BJ (cell line): ENCODE measurements at regions of chr10 and their contacts with region 1.

Region 1: DNA sequence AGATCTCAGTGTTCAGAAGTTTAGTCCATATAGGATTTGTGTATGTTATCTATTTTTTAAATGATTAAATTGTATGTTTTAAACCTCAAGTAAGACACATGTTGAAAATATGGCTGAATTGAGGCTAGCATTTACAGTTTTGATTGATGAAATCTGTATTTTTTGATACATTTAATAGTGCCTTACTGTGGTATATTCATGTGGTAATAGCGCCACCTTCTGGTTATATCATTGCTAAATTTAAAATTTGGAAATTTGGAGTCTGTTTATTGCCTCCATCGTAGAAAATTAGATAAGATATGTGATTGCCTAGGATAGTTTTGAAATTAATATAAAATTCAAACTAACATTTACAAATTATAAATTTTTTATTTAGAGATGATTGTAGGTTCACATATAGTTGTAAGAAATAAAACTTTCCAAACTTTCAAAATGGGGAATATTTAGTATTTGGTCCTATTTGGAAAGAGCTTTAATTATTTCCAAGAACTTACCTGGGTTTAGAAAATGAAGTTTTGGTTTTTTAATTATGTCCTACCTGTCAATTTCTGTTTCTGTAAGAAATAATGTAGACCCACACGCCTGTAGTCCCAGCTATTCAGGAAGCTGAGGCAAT is 19.1 kb upstream of the ARMS2 start:
- DNase-seq: no peak
- H3K4me3 ChIP-seq: no peak overlapping the region
- H3K27me3 ChIP-seq: no peaks in the 10 kb centered on the region
- CTCF ChIP-seq: peak; percentile 32

Region 2: GRCh38 chr10:122342293-122343134 is 92.8 kb before region 1 on chr10:
- CTCF ChIA-PET with region 1: interaction called, 92 read pairs
- POLR2A ChIA-PET with region 1: no interaction called
- DNase-seq: peak; percentile 49
- H3K4me3 ChIP-seq: no peak overlapping the region
- H3K27me3 ChIP-seq: no peaks in the 10 kb centered on the region
- CTCF ChIP-seq: peak; percentile 83

Region 3: GRCh38 chr10:122419876-122420623 is 15.3 kb before region 1 on chr10:
- CTCF ChIA-PET with region 1: interaction called, 10 read pairs
- POLR2A ChIA-PET with region 1: no interaction called
- DNase-seq: peak; percentile 68
- H3K4me3 ChIP-seq: no peak overlapping the region
- H3K27me3 ChIP-seq: no peaks in the 10 kb centered on the region
- CTCF ChIP-seq: no peak

Region 4: GRCh38 chr10:122453806-122454460 is 18.6 kb after region 1 on chr10:
- CTCF ChIA-PET with region 1: interaction called, 19 read pairs
- POLR2A ChIA-PET with region 1: no interaction called
- DNase-seq: no peak
- H3K4me3 ChIP-seq: no peak overlapping the region
- H3K27me3 ChIP-seq: peaks cover 7% of the 10 kb centered on the region
- CTCF ChIP-seq: no peak

Region 5: GRCh38 chr10:122565728-122566206 is 130.4 kb after region 1 on chr10:
- CTCF ChIA-PET with region 1: interaction called, 29 read pairs
- POLR2A ChIA-PET with region 1: no interaction called
- DNase-seq: peak; percentile 24
- H3K4me3 ChIP-seq: no peak overlapping the region
- H3K27me3 ChIP-seq: peaks cover 7% of the 10 kb centered on the region; the same call in 1 of the 2 replicates
- CTCF ChIP-seq: peak; percentile 89

Region 6: DNA sequence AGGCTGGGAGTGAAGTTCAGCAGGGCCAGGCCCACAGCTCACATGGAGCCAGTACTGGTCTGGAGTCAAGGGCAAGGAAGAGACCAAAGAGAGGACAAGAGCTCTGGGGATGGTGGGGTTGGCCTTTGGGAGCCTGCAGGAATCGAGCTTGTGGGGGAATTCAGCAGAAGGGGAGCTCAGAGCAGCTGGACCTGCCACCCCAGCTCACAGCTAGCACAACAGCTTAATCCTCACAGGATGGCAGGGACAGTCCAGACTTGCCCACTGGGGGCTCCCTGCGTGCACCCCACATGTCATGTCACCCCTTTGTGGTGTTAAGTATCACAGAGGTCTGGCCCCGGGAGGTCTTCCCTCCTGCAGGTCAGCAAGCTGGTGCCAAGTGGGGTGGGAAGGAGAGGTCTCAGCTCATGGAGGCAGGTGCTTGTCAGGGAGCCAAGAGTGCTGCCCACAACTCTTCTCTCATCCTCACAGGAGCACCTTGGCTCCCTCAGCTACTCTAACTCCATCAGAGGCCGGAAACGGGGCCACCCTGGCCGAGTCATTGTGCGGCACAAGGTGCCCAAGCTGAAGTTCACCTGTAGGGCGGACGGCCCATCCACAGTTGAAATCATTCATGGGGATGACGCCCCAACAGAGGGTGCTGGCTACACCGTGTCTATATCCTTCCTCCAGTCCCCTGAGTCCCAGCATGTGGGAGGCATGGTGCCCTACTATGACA is 387.8 kb after region 1 on chr10:
- CTCF ChIA-PET with region 1: no interaction called
- POLR2A ChIA-PET with region 1: no interaction called
- DNase-seq: no peak
- H3K4me3 ChIP-seq: no peak overlapping the region
- H3K27me3 ChIP-seq: peaks cover 2% of the 10 kb centered on the region; the same call in 1 of the 2 replicates
- CTCF ChIP-seq: no peak